Activated naive CD4-positive, alpha-beta T cell treated with anti-CD3 and anti-CD28 coated beads for 36 hours (primary cell): ENCODE measurements at regions of chr6 and their contacts with region 1.

Region 1: GRCh38 chr6:21873562-21873961 is 280.0 kb downstream of the SOX4 start:
- DNase-seq: no peak
- H3K4me3 Mint-ChIP-seq: no peak overlapping the region
- H3K27ac Mint-ChIP-seq: no peak overlapping the region
- H3K4me1 Mint-ChIP-seq: peaks cover 10% of the 10 kb centered on the region
- H3K27me3 Mint-ChIP-seq: no peaks in the 10 kb centered on the region

Region 2: DNA sequence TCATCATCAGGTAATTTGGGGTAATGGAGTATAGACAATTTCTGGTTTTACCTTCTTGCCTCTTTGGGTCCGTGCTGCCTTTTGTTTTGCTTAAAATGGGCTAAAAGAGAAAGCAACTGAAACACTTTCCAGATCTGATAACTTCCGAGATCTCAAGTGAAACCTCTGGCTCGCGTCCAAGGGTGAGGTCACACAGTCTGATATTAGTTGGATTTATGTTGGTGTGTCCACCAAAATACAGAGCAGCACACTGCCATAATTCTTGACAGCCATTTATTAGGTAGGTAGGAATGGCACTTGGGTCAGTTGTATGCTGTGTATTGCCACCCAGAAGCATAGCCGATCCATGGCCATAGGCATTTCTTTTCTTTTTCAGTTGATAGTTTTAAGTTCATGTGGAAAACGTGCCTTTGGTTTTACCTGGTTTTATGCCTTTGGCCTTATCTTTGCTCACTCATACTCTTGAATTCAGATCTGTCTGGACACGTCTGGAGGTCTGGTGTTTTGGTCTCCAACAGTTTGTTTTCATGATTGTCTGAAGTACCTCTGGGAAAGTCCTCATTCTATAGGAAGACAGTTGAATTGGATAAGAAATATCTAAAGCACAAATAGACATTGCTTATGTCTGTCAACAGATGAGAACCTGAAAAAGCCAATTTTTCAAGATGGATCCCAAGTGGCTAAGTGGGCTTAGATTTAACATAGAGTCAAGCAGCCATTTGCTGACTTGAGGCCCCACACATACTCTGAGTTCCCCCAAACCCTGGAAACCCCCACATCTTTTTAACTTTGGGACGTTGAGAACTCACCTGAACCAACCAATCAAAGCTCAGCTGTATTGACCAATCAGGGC is 40.8 kb after region 1 on chr6:
- CTCF ChIA-PET with region 1: no interaction called
- intact Hi-C with region 1: loop called (anchors 2 kb)
- DNase-seq: peak; percentile 65
- H3K4me3 Mint-ChIP-seq: no peak overlapping the region
- H3K27ac Mint-ChIP-seq: no peak overlapping the region
- H3K4me1 Mint-ChIP-seq: peaks cover 21% of the 10 kb centered on the region
- H3K27me3 Mint-ChIP-seq: no peaks in the 10 kb centered on the region

Region 3: GRCh38 chr6:22668307-22668706 is 794.7 kb after region 1 on chr6:
- CTCF ChIA-PET with region 1: no interaction called
- intact Hi-C with region 1: no loop called
- DNase-seq: no peak
- H3K4me3 Mint-ChIP-seq: no peak overlapping the region
- H3K27ac Mint-ChIP-seq: no peak overlapping the region
- H3K4me1 Mint-ChIP-seq: no peaks in the 10 kb centered on the region
- H3K27me3 Mint-ChIP-seq: no peaks in the 10 kb centered on the region